Calu3 (cell line): ENCODE measurements at regions of chr4 and their contacts with region 1.

Region 1: DNA sequence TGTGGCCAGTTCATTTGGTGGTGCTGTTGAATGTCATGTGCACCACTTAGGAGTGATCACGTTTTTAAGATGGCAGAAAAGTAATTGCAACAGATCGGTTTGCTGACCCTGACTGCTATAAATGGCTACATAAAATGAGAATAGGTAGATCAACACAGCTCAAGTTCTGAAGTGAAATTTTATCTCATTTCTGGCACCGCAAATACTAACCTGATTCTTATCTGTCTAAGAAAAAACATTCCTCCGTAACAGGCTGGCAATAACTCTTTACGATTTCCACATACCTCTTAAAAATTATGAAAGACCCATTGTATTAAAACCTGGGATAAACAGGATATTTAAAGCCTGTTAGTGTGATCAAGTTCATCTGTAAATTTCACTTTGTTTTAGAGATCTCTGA is 387.5 kb downstream of the PDGFC start:
- DNase-seq: no peak
- H3K4me3 Mint-ChIP-seq: no peak overlapping the region
- H3K27ac Mint-ChIP-seq: peak overlapping the region; percentile 74
- H3K4me1 Mint-ChIP-seq: peaks cover 11% of the 10 kb centered on the region
- H3K27me3 Mint-ChIP-seq: no peaks in the 10 kb centered on the region
- CTCF ChIP-seq: no peak

Region 2: GRCh38 chr4:156503119-156503518 is 81.0 kb before region 1 on chr4:
- CTCF ChIA-PET with region 1: no interaction called
- intact Hi-C with region 1: loop called (anchors 5 kb)
- DNase-seq: peak; percentile 23
- H3K4me3 Mint-ChIP-seq: peak overlapping the region; percentile 9
- H3K27ac Mint-ChIP-seq: peak overlapping the region; percentile 58
- H3K4me1 Mint-ChIP-seq: peaks cover 25% of the 10 kb centered on the region
- H3K27me3 Mint-ChIP-seq: no peaks in the 10 kb centered on the region
- CTCF ChIP-seq: no peak

Region 3: GRCh38 chr4:156642161-156642560 is 58.1 kb after region 1 on chr4:
- CTCF ChIA-PET with region 1: no interaction called
- intact Hi-C with region 1: loop called (anchors 1 kb)
- DNase-seq: no peak
- H3K4me3 Mint-ChIP-seq: no peak overlapping the region
- H3K27ac Mint-ChIP-seq: no peak overlapping the region
- H3K4me1 Mint-ChIP-seq: peaks cover 18% of the 10 kb centered on the region
- H3K27me3 Mint-ChIP-seq: no peaks in the 10 kb centered on the region
- CTCF ChIP-seq: no peak

Region 4: GRCh38 chr4:156751486-156751885 is 167.4 kb after region 1 on chr4:
- CTCF ChIA-PET with region 1: no interaction called
- intact Hi-C with region 1: loop called (anchors 10 kb)
- DNase-seq: no peak
- H3K4me3 Mint-ChIP-seq: no peak overlapping the region
- H3K27ac Mint-ChIP-seq: no peak overlapping the region
- H3K4me1 Mint-ChIP-seq: peaks cover 8% of the 10 kb centered on the region
- H3K27me3 Mint-ChIP-seq: no peaks in the 10 kb centered on the region
- CTCF ChIP-seq: no peak